ENCODE measurements at regions of chr1 and their contacts with region 1.

Region 1: DNA sequence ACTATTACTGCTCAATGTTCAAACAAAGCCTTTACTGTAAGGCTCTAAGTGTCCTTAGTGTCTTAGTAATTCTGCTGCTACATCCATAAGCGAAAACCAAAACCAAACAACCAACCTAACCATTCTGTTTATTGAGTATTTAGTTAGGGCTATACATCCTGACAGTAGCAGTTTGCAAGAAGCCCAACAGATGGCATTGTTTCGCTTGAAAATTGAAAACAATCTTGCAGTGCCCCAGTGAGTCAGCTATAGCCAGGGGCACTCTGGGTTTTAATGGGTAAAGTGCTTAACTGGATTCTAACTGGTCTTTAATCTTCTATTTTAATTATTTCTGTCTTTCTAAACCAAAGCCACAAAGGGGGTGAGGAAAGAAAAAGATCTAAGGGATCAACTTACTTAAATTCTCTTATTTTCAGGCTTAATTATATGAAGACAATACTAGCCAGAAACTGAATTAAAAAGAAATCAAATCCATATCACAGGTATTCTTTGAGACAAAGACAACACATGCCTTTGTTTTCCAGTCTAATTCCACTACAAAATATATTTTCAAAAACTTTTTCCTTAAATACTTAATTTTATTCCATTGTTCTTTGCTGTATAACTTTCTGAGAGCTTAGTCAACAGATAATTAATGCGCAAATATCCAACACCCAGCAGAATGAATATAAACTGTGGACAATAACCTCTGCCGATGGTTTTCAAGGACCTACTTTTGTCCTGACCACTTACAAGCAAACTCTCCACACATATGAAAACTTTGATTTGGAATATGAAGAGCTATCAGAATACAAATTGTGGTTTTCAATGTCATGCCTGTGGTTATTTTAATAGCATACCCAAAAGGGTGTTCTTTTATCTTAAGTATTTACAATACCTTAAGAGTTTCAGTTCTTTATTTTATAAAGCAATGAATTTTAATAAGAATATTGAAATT is 15.2 kb downstream of the POGZ start:
- DNase-seq: peak; percentile 74
- ATAC-seq: peak; percentile 96
- H3K4me3 ChIP-seq: no peak overlapping the region
- H3K27ac ChIP-seq: peak overlapping the region; percentile 69
- H3K4me1 ChIP-seq: peaks cover 24% of the 10 kb centered on the region; the same call in 1 of the 2 replicates
- H3K27me3 ChIP-seq: no peaks in the 10 kb centered on the region
- CTCF ChIP-seq: peak; percentile 80; the same call in 1 of the 2 replicates

Region 2: GRCh38 chr1:151494741-151495281 is 50.7 kb after region 1 on chr1:
- CTCF ChIA-PET with region 1: interaction called, 11 read pairs
- POLR2A ChIA-PET with region 1: no interaction called
- in situ Hi-C with region 1: no loop called
- intact Hi-C with region 1: no loop called
- DNase-seq: peak; percentile 61
- ATAC-seq: peak; percentile 84
- H3K4me3 ChIP-seq: no peak overlapping the region
- H3K27ac ChIP-seq: no peak overlapping the region
- H3K4me1 ChIP-seq: peaks cover 11% of the 10 kb centered on the region; the same call in 1 of the 2 replicates
- H3K27me3 ChIP-seq: no peaks in the 10 kb centered on the region
- CTCF ChIP-seq: no peak

Region 3: DNA sequence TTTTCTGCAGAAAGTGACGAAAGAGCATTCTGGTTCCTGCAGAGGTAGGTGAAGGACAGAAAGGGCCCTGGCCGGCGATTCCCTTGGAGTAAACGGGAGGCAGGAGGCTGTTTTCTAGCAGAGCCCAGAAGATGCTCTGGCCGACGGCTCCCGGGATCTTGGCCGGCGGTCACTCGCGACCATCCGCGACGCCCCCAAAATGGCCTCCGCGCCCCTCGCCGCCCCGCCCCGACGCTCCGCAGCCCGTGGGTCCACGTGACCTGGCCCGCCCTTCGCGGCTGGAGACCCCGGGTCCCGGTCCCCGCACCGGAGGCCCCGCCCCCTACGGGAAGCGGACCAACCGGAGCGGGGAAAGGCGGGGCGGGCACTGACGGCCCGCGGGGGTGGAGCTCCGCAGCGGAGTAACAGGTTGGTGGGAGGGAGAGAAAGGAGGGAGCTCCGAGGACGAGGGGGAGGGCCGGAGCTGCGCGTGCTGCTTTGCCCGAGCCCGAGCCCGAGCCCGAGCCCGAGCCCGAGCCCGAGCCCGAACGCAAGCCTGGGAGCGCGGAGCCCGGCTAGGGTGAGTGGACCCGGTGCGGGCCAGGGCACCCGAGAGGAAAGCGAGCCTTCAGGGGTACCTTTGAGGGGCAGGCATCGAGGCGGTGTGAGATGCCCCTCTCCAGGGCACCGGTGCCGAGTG is 67.0 kb after region 1 on chr1 and contains the start of gene CGN:
- CTCF ChIA-PET with region 1: no interaction called
- POLR2A ChIA-PET with region 1: no interaction called
- in situ Hi-C with region 1: no loop called
- intact Hi-C with region 1: loop called (anchors 10 kb)
- DNase-seq: no peak
- ATAC-seq: peak; percentile 97
- H3K4me3 ChIP-seq: peak within 1 kb of the TSS; percentile 50 to 80
- H3K27ac ChIP-seq: peak within 1 kb of the TSS; percentile 78
- H3K4me1 ChIP-seq: peaks cover 32% of the 10 kb centered on the region
- H3K27me3 ChIP-seq: no peaks in the 10 kb centered on the region
- CTCF ChIP-seq: no peak
- total RNA-seq, gene CGN: 10.2 TPM

Region 4: DNA sequence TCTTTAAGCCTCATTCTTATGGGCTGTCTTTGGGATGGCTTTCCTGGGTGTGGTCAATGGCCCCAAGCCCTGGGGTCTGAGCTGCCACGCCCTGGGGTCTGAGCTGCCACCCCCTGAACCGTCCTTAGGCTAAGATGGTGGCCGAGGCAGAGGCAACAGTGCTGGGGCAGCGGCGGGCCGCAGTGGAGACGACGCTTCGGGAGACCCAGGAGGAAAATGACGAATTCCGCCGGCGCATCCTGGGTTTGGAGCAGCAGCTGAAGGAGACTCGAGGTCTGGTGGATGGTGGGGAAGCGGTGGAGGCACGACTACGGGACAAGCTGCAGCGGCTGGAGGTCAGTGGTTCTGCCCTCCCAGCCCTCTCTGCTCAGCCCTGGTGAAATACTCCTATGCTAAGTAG is 85.7 kb after region 1 on chr1:
- CTCF ChIA-PET with region 1: no interaction called
- POLR2A ChIA-PET with region 1: interaction called, 10 read pairs
- in situ Hi-C with region 1: no loop called
- intact Hi-C with region 1: no loop called
- DNase-seq: no peak
- ATAC-seq: no peak
- H3K4me3 ChIP-seq: no peak overlapping the region
- H3K27ac ChIP-seq: no peak overlapping the region
- H3K4me1 ChIP-seq: no peaks in the 10 kb centered on the region
- H3K27me3 ChIP-seq: no peaks in the 10 kb centered on the region
- CTCF ChIP-seq: no peak

Region 5: GRCh38 chr1:151539990-151540981 is 96.2 kb after region 1 on chr1 and contains the start of gene TUFT1:
- CTCF ChIA-PET with region 1: no interaction called
- POLR2A ChIA-PET with region 1: interaction called, 3 read pairs
- in situ Hi-C with region 1: no loop called
- intact Hi-C with region 1: loop called (anchors 10 kb)
- DNase-seq: peak; percentile 70
- ATAC-seq: peak; percentile 93
- H3K4me3 ChIP-seq: peak within 1 kb of the TSS; percentile 85 to 98
- H3K27ac ChIP-seq: peak within 1 kb of the TSS; percentile 87
- H3K4me1 ChIP-seq: peaks cover 29% of the 10 kb centered on the region
- H3K27me3 ChIP-seq: no peaks in the 10 kb centered on the region
- CTCF ChIP-seq: no peak
- total RNA-seq, gene TUFT1: 66.4 TPM

Region 6: DNA sequence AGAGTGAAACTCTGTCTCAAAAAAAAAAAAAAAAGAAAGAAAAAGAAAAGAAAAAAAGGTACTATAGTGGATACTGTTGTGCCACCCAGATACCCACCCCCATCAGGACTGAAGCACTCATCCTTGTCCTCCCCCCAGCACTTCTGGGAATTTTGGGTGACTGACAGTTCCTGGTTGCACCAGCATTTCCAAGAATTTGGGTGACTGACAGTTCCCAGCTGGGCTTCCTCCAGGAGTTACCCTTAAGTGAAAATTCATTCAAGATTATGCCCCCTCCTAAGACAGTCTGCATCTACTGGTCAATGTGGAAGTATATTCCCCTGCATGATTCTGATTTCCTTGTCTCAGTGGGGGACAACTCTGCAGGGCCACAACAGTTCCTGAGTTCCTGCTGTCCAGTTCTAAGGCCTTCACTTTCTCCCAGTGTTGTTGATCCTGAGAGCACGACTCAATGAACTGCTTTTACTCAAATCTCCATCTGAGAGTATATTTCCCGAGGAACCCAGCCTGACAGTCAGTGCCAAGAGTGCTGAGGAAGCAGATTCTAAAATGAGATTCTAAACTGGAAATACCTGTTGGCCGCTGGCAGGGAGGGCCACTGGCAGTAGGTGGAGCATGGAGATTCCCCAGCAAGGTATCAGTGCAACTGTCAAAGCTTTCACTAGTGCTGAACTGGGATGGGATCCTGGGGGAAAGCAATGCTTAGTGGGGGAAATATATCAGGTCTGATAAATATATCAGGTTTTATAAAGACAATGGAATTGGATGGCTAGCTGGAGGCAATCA is 295.7 kb after region 1 on chr1:
- CTCF ChIA-PET with region 1: interaction called, 6 read pairs
- POLR2A ChIA-PET with region 1: no interaction called
- in situ Hi-C with region 1: no loop called
- intact Hi-C with region 1: loop called (anchors 5 kb)
- DNase-seq: no peak
- ATAC-seq: no peak
- H3K4me3 ChIP-seq: no peak overlapping the region
- H3K27ac ChIP-seq: no peak overlapping the region
- H3K4me1 ChIP-seq: no peaks in the 10 kb centered on the region
- H3K27me3 ChIP-seq: peaks cover 2% of the 10 kb centered on the region; the same call in 1 of the 2 replicates
- CTCF ChIP-seq: no peak

Region 7: DNA sequence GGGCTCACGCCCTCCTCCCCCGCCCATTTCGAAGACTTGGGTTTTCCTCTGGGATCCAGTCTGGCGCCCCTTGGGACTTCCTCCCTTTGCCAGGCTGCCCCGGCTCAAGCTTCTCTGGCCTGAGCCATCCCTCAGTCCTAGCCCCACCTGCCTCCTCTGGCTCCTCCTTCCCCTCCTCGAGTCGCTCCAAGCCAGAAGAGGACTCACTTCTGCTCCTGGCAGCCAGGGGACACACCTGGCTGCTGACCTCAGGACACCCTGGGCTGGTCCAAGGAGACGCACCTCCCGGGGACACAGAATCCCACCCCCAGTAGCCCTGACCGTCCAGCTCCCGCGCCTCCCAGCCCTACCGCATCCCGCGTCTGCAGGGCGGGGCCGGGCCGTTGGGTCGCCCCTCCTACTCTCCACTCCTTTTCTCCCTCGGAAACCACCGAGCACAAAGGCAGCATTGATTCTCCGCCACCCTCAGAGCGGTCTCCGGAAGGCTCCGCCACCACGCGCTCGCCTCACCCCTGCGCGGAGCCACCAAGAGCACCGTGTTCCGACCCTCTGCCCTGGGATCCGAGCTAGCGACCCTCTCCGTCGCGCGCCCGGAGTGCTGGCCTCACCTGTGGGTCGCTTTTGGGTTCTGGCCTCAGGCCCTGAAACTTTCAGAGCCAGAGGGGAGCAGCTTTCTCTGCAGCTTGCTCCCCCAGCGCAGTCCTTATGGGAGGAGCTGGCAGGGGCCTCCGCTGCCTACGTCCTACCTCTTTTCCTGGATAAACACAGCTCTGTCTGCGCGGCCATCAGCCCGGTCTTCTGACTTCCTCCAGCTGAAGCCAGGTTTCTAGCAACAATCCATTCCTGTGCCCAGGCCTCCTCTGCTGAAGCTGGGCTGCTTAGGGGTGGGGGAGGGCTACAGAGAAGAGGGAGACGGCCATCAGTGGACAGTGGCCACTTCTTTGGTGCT is 395.6 kb after region 1 on chr1 and contains the start of gene C2CD4D:
- CTCF ChIA-PET with region 1: no interaction called
- POLR2A ChIA-PET with region 1: no interaction called
- in situ Hi-C with region 1: no loop called
- intact Hi-C with region 1: loop called (anchors 10 kb)
- DNase-seq: no peak
- ATAC-seq: peak; percentile 90
- H3K4me3 ChIP-seq: peak within 1 kb of the TSS; percentile 57 to 73
- H3K27ac ChIP-seq: peak within 1 kb of the TSS; percentile 90
- H3K4me1 ChIP-seq: peaks cover 10% of the 10 kb centered on the region
- H3K27me3 ChIP-seq: no peaks in the 10 kb centered on the region
- CTCF ChIP-seq: no peak
- total RNA-seq, gene C2CD4D: 1.2 TPM